HCT116 (cell line): ENCODE measurements at regions of chr11 and their contacts with region 1.

Region 1: GRCh38 chr11:17730608-17731462 is 3.7 kb upstream of the KCNC1 start:
- DNase-seq: peak; percentile 75
- ATAC-seq: peak; percentile 91
- H3K4me3 ChIP-seq: no peak overlapping the region
- H3K27ac ChIP-seq: no peak overlapping the region
- H3K4me1 ChIP-seq: peaks cover 0 to 8% of the 10 kb centered on the region in 2 experiments; a peak in 3 of 4 replicates
- H3K27me3 ChIP-seq: no peaks in the 10 kb centered on the region
- CTCF ChIP-seq: peak; percentile 69 to 91 (median 91)
- POLR2A ChIP-seq: no peak
- RAD21 ChIP-seq: peak; percentile 96

Region 2: GRCh38 chr11:17528181-17528691 is 202.6 kb before region 1 on chr11:
- CTCF ChIA-PET with region 1: interaction called, 11 read pairs
- POLR2A ChIA-PET with region 1: no interaction called
- RAD21 ChIA-PET with region 1: no interaction called
- intact Hi-C with region 1: no loop called
- DNase-seq: no peak
- ATAC-seq: peak; percentile 99
- H3K4me3 ChIP-seq: no peak overlapping the region
- H3K27ac ChIP-seq: no peak overlapping the region
- H3K4me1 ChIP-seq: no peaks in the 10 kb centered on the region
- H3K27me3 ChIP-seq: no peaks in the 10 kb centered on the region
- CTCF ChIP-seq: peak; percentile 79 to 95 (median 92)
- POLR2A ChIP-seq: no peak
- RAD21 ChIP-seq: peak; percentile 80

Region 3: DNA sequence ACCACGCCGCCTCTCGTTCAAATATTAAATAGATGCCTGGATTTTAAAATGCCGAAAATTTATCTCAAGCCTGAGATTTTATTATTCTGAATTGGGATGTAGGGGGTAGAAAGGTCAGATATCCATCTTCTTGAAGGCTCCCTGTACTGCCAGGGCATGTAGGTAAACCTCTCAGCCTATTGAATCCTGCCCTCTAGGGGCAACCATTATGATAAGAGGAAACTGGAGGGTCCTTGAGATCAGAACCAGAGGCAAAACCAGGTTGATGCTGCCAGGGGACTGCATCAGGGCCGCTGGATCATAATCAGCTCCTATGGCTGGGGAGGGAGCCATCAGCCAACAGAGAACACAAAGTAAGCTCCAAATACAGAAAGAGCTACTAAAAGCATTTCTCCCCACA is 96.2 kb after region 1 on chr11:
- CTCF ChIA-PET with region 1: interaction called, 12 read pairs
- POLR2A ChIA-PET with region 1: no interaction called
- RAD21 ChIA-PET with region 1: no interaction called
- intact Hi-C with region 1: no loop called
- DNase-seq: no peak
- ATAC-seq: peak; percentile 67
- H3K4me3 ChIP-seq: no peak overlapping the region
- H3K27ac ChIP-seq: no peak overlapping the region
- H3K4me1 ChIP-seq: no peaks in the 10 kb centered on the region
- H3K27me3 ChIP-seq: no peaks in the 10 kb centered on the region
- CTCF ChIP-seq: peak; percentile 37 to 48 (median 41); a peak in 4 of 6 replicates
- POLR2A ChIP-seq: no peak
- RAD21 ChIP-seq: peak; percentile 60

Region 4: GRCh38 chr11:17859552-17859951 is 128.7 kb after region 1 on chr11:
- CTCF ChIA-PET with region 1: no interaction called
- POLR2A ChIA-PET with region 1: no interaction called
- RAD21 ChIA-PET with region 1: no interaction called
- intact Hi-C with region 1: no loop called
- DNase-seq: no peak
- ATAC-seq: no peak
- H3K4me3 ChIP-seq: no peak overlapping the region
- H3K27ac ChIP-seq: no peak overlapping the region
- H3K4me1 ChIP-seq: no peaks in the 10 kb centered on the region
- H3K27me3 ChIP-seq: no peaks in the 10 kb centered on the region
- CTCF ChIP-seq: no peak
- POLR2A ChIP-seq: no peak
- RAD21 ChIP-seq: no peak

Region 5: DNA sequence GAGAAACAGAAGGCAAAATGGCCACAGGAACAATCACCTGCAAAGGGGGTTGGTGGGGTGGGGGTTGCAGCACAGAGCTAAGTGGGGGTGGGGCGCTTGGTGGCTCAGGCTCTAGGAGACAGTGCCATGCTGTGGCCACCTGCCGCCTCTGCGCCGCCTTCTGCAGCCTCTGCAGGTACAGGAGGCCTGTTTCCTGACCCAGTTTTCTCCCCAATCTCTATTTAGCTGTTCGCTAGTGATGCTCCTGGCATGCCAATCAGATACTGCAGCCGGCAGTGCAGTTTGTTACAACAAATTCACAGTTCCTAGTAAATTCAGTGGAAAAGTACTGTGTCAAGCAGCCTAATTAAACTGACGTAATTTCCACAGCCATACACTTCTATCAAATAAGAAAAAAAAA is 175.6 kb after region 1 on chr11:
- CTCF ChIA-PET with region 1: interaction called, 21 read pairs
- POLR2A ChIA-PET with region 1: no interaction called
- RAD21 ChIA-PET with region 1: interaction called, 4 to 6 read pairs
- intact Hi-C with region 1: loop called (anchors 1 kb)
- DNase-seq: no peak
- ATAC-seq: peak; percentile 98
- H3K4me3 ChIP-seq: no peak overlapping the region
- H3K27ac ChIP-seq: no peak overlapping the region
- H3K4me1 ChIP-seq: no peaks in the 10 kb centered on the region
- H3K27me3 ChIP-seq: no peaks in the 10 kb centered on the region
- CTCF ChIP-seq: peak in 2 of 3 experiments; percentile 24 to 55; a peak in 3 of 6 replicates
- POLR2A ChIP-seq: no peak
- RAD21 ChIP-seq: peak; percentile 56

Region 6: DNA sequence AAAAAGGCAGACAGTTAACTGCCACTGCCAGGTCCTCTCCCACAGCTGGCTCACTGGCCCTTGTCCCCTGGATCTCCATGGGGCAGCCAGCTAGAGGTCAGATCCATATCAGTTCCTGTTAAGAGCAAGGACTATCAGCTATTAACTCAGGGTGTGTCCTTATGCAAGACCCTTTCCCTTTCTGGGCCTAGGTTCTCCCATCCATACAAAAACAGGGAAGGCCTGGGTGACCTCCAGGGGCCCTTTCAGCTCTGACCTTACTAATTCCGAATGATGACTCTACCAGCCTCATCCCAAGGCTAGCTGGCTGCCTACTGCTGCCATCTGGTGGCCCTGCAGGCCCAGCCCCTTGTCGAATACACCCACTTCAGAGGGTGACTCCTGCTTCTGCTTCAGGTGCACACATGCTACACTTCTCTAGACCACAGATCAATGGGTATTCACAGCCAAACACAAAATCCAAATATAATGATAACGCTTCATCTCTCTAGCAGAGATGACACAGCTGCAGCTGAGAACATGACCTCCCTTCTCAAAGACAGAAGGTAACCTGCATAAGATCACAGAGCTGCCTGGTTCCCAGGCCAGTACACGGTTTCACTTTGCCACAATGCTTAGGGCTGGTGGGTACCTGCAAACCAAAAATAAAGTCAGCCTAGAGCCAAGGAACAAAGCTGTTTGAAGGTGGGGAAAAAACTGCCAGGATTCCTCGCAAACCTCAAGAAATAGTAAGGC is 247.9 kb after region 1 on chr11:
- CTCF ChIA-PET with region 1: interaction called, 116 read pairs
- POLR2A ChIA-PET with region 1: interaction called, 3 read pairs
- RAD21 ChIA-PET with region 1: interaction called, 13 to 15 read pairs
- intact Hi-C with region 1: loop called (anchors 1 kb)
- DNase-seq: no peak
- ATAC-seq: peak; percentile 95
- H3K4me3 ChIP-seq: no peak overlapping the region
- H3K27ac ChIP-seq: no peak overlapping the region
- H3K4me1 ChIP-seq: no peaks in the 10 kb centered on the region
- H3K27me3 ChIP-seq: no peaks in the 10 kb centered on the region
- CTCF ChIP-seq: peak; percentile 72 to 81 (median 78); a peak in 5 of 6 replicates
- POLR2A ChIP-seq: no peak
- RAD21 ChIP-seq: peak; percentile 69